Posterior cingulate gyrus (tissue), 11 donors: ENCODE measurements at regions of chr16 and their contacts with region 1.

Region 1: GRCh38 chr16:30122604-30123160 is 338 bp downstream of the MAPK3 start:
- DNase-seq: peak in 2 of 10 donors; percentile 12 to 89

Region 2: DNA sequence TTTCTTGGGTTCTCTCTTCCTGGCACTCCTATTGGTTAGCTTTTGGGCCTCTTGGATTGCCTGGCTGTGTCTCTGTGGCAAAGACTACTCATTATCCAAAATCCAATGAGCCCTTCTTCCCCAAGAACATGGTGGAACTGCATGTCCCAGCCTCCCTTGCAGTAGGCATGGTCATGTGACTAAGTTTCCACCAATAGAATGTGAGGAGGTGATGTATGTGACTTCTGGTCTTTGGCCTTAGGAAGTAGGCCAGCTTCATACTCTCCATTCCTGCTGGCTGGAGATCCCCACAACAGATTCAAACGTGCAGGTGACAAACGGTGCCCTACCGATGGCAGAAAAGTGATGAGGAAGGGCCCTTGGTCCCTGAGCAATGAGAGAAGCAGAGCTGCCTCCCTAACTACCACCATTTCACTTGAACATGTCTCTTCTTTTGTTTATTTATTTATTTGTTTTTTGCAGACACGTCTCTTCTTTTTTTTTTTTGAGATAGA is 476.9 kb before region 1 on chr16:
- intact Hi-C with region 1: no loop called
- DNase-seq: no peak

Region 3: GRCh38 chr16:30065143-30065850 is 57.4 kb before region 1 on chr16 and contains the start of gene ALDOA:
- intact Hi-C with region 1: loop called (anchors 2 kb)
- DNase-seq: peak; percentile 96 to 100 (median 98)

Region 4: GRCh38 chr16:30091474-30092372 is 31.0 kb before region 1 on chr16 and contains the start of gene TBX6:
- intact Hi-C with region 1: loop called (anchors 1 kb)
- DNase-seq: peak; percentile 87 to 99 (median 94)